Aorta (tissue), 5 donors: ENCODE measurements at regions of chr19 and their contacts with region 1.

Region 1: DNA sequence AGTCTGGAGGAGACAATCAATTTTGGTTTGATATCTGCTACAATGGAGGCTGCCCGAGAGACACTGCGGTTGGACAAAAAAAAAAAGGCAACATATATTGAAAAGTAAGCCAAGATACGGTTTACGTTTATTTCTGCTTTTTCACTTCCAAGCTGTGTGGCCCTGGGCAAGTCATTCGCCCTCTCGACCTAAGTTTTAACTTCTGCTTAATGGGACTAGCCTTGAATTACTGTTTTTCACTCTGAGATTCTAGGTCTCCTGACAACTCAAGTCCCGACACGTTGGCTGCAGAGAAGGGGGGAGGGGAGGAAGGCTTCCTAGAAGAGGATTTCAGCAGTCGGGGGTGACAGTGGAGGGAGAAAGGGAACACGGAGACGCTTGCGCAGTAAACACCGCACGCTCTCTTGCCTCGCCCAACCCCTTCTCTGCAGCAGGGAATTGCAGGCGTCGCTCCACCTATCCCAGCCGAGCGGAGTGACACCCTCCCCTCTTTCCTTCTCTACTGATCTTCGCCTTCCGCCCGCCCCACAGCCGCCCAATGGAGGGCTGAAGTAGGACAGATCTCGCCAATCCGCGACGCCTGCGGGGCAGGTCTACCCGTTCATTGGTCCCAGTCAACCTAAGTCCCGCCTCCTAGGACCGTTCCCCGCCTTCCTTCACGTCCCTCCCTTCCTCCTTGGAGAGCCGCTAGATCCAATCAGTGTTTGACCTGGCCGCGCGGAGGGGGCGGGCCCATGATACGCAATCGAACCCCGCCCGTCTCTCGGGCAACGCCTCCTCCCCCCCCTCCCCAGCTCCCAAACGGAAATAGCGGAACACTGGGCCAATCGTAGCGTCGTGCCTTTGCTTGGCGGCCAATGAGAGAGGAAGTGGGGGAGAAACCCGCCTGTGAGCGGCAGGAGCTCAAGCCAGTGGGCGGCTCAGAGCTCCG is 529 bp upstream of the AP2A1 start:
- DNase-seq: peak; percentile 99 to 100
- ATAC-seq: peak; percentile 96
- H3K4me3 ChIP-seq: peak overlapping the region; percentile 19 to 98
- H3K27ac ChIP-seq: peak overlapping the region; percentile 72 to 85
- H3K4me1 ChIP-seq: peaks cover 0 to 4% of the 10 kb centered on the region in 2 donors
- H3K27me3 ChIP-seq: no peaks in the 10 kb centered on the region

Region 2: GRCh38 chr19:49528211-49528771 is 238.0 kb before region 1 on chr19:
- intact Hi-C with region 1: loop called in 1 of 2 experiments (anchors 10 kb)
- DNase-seq: peak; percentile 74 to 86
- ATAC-seq: peak; percentile 41
- H3K4me3 ChIP-seq: peak overlapping the region; percentile 2 to 36
- H3K27ac ChIP-seq: peak overlapping the region in 1 of 2 donors; percentile 34
- H3K4me1 ChIP-seq: no peaks in the 10 kb centered on the region
- H3K27me3 ChIP-seq: no peaks in the 10 kb centered on the region

Region 3: GRCh38 chr19:49749055-49749716 is 17.1 kb before region 1 on chr19:
- intact Hi-C with region 1: no loop called
- DNase-seq: no peak
- ATAC-seq: no peak
- H3K4me3 ChIP-seq: no peak overlapping the region
- H3K27ac ChIP-seq: no peak overlapping the region
- H3K4me1 ChIP-seq: no peaks in the 10 kb centered on the region
- H3K27me3 ChIP-seq: no peaks in the 10 kb centered on the region

Region 4: GRCh38 chr19:49798574-49798973 is 32.3 kb after region 1 on chr19:
- intact Hi-C with region 1: no loop called
- DNase-seq: no peak
- ATAC-seq: no peak
- H3K4me3 ChIP-seq: no peak overlapping the region
- H3K27ac ChIP-seq: no peak overlapping the region
- H3K4me1 ChIP-seq: no peaks in the 10 kb centered on the region
- H3K27me3 ChIP-seq: no peaks in the 10 kb centered on the region

Region 5: GRCh38 chr19:49808711-49809159 is 42.5 kb after region 1 on chr19:
- intact Hi-C with region 1: loop called (anchors 5 kb)
- DNase-seq: peak; percentile 96 to 99
- ATAC-seq: peak; percentile 85
- H3K4me3 ChIP-seq: peak overlapping the region; percentile 32 to 41
- H3K27ac ChIP-seq: peak overlapping the region in 1 of 2 donors; percentile 37
- H3K4me1 ChIP-seq: no peaks in the 10 kb centered on the region
- H3K27me3 ChIP-seq: no peaks in the 10 kb centered on the region

Region 6: GRCh38 chr19:49818649-49819370 is 52.5 kb after region 1 on chr19:
- intact Hi-C with region 1: no loop called
- DNase-seq: no peak
- ATAC-seq: no peak
- H3K4me3 ChIP-seq: peak overlapping the region; percentile 1 to 76
- H3K27ac ChIP-seq: no peak overlapping the region
- H3K4me1 ChIP-seq: no peaks in the 10 kb centered on the region
- H3K27me3 ChIP-seq: no peaks in the 10 kb centered on the region

Region 7: DNA sequence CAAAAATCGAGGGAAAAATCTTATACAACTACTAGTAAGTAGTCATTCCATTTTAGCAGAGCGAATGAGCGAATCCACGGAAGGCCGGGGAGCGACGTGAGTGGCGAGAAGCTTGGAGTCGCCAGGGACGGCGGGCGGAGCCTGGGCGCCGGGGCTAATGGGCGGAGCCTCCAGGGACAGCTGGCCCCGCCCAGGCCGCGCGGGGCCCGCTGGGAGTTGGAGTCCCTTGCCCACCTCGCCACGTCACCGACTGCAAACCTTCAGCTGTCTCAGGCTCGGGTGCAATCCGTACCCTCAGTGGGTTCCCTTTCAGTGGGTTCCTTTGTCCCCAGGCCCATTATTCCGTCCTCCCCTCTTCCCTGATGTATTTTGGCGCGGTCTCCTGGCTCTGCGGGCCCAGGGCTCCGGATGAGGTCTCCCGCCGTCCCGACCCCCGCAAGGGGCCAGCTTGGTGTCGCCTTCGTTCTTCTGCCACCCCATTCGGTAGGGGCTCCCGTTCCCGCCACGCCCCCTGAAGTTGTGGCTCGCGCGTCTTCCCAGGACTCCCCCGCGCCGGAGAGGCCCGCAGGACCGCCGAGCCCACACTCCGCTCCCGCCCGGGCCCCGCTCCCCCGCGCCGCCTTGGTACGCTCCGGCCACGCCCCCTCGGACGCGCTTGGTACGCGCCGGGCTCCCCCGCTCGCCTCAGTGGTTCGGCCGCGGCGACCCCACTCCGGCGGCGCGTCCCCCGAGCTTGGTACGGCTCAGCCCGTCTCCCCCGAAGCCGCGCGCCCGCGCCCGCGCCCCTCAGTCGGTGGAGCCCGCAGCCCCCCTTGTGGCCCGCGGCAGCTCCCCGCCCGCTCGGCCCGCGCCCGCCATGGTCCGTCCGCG is 84.4 kb after region 1 on chr19 and contains the start of gene PTOV1:
- intact Hi-C with region 1: no loop called
- DNase-seq: peak; percentile 94 to 97
- ATAC-seq: peak; percentile 96
- H3K4me3 ChIP-seq: peak within 1 kb of the TSS; percentile 93 to 97
- H3K27ac ChIP-seq: peak within 1 kb of the TSS; percentile 84 to 99
- H3K4me1 ChIP-seq: no peaks in the 10 kb centered on the region
- H3K27me3 ChIP-seq: no peaks in the 10 kb centered on the region
- total RNA-seq, gene PTOV1: 103 to 133 TPM